Left colon (tissue), 2 donors: ENCODE measurements at regions of chr1 and their contacts with region 1.

Region 1: GRCh38 chr1:36703526-36704208 is 221.0 kb upstream of the CSF3R start:
- DNase-seq: peak; percentile 40 to 78
- ATAC-seq: peak; percentile 94

Region 2: DNA sequence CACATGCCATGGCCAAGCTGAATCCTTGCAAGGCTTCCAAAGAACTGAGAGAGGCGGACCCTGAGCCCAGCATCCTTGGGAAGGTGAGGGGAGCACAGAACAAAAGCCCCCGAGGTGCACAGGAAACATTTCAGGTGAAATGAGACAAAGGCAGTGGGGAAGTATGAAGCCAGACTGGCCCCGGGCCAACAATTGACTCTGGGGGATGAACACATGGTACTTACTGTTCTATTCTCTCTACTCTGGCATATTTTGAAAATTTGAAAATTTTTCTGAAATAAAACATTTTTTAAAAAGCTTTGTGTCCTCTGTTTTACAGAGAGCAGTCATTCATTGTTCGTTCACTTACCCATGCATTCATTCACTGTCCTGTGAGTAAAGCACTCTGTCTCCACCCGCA is 252.9 kb after region 1 on chr1:
- intact Hi-C with region 1: no loop called
- DNase-seq: no peak
- ATAC-seq: no peak

Region 3: GRCh38 chr1:37147392-37147831 is 443.7 kb after region 1 on chr1:
- intact Hi-C with region 1: no loop called
- DNase-seq: no peak
- ATAC-seq: no peak

Region 4: DNA sequence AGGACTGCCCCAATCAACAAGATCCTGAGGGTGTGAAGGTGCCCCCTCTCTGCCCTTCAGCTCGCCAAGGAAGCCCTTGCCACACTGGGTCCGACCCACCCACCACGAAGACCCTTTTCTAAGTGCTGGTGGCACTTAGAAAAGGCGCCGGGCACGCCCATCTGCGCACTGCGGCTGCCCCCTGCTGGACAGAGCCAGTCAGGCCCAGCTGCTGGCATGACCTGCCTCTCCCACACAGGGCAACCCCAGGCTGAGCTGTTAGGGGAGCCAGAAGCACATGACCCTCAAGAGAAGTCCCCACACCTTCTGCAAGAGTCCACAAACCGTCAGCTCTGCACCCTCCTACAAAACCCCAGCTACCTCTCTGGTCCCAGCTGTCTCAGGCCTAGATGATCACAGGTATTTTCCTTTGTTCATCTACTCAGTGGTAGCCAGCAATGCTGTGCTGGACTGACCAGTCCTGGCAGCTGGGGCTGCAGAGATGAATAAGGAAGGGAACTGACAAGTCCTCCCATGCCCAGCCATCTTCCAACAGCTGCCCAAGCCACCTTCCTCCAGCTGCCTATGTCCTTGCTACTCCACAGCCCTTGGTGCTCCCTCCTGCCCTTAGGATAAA is 730.7 kb after region 1 on chr1:
- intact Hi-C with region 1: loop called in 1 of 2 experiments (anchors 5 kb)
- DNase-seq: peak in 1 of 2 donors; percentile 74
- ATAC-seq: peak; percentile 81